ENCODE measurements at regions of chr4 and their contacts with region 1.

Region 1: GRCh38 chr4:14178421-14178820 is 550.9 kb upstream of the BOD1L1 start:
- DNase-seq: peak; percentile 37
- H3K4me3 ChIP-seq: no peak overlapping the region
- H3K27ac ChIP-seq: peak overlapping the region; percentile 22
- H3K4me1 ChIP-seq: peaks cover 17% of the 10 kb centered on the region
- H3K27me3 ChIP-seq: no peaks in the 10 kb centered on the region
- CTCF ChIP-seq: no peak

Region 2: DNA sequence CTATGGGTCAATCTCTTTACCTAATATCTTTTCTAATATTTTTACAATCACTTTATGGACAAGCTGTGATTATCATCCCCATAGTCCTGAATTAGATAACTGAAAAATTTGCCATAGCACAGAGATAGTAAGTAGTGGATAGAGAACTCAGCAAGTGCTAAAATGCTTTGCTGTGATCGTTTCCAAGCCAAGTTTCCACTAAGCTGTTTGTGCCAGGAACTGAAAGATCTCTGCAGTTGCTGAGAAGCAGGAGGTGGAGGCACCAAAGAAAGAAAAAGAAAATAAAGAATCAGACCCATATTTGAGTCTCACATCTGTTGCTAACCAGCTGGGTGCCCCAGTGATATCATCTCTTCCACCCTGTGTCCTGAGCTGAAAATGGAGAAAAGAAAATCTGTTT is 54.7 kb after region 1 on chr4:
- CTCF ChIA-PET with region 1: no interaction called
- dilution Hi-C with region 1: no loop called
- in situ Hi-C with region 1: no loop called
- intact Hi-C with region 1: no loop called
- DNase-seq: no peak
- H3K4me3 ChIP-seq: no peak overlapping the region
- H3K27ac ChIP-seq: no peak overlapping the region
- H3K4me1 ChIP-seq: peaks cover 14% of the 10 kb centered on the region
- H3K27me3 ChIP-seq: no peaks in the 10 kb centered on the region
- CTCF ChIP-seq: no peak

Region 3: DNA sequence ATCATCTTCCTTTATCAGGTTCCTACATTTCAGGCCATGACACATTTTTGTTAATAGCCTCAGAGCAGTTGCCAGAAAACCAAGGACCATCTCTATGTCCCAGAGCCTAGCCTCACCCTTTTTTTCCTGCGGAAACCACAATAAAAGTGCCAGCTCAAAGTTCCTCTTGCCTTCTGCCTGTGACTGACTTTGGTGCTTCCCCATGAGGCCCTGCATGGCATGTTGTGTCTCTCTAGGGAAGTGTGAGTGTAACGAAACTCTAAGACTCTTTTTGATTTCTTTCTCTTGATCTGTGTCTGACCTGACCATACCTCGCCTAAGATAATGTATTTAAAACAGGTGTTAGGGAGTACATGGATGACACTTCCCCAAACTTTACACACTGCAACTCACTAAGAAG is 91.4 kb after region 1 on chr4:
- CTCF ChIA-PET with region 1: no interaction called
- dilution Hi-C with region 1: loop called (anchors 5 kb)
- in situ Hi-C with region 1: no loop called
- intact Hi-C with region 1: no loop called
- DNase-seq: no peak
- H3K4me3 ChIP-seq: no peak overlapping the region
- H3K27ac ChIP-seq: no peak overlapping the region
- H3K4me1 ChIP-seq: peaks cover 8% of the 10 kb centered on the region
- H3K27me3 ChIP-seq: no peaks in the 10 kb centered on the region
- CTCF ChIP-seq: no peak

Measured in mammary epithelial cell (primary cell).